ENCODE measurements at regions of chr3 and their contacts with region 1.

Region 1: DNA sequence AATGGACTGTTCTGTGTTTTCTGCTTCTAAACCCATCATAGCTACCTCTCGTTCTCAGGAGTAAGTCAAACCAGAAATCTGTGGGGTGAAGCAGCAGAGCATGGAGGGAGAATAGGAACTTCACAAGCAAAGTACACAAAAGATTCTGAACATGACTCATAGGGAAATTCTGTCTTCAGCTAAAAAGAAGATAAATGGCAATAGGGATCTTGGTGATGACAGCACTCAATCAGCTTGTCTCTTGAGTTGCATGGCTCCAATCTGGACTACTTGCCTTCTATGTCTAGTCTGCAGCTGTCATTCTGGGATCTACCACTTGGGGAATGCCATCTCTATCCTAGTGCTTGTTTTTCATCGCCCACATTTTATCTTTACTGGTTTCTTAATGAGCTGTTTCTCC is 13.5 kb upstream of the GRAMD1C start:
- DNase-seq: no peak
- ATAC-seq: peak; percentile 81
- H3K4me3 Mint-ChIP-seq: no peak overlapping the region
- H3K27ac Mint-ChIP-seq: no peak overlapping the region
- H3K4me1 Mint-ChIP-seq: peaks cover 6% of the 10 kb centered on the region
- H3K27me3 Mint-ChIP-seq: no peaks in the 10 kb centered on the region
- CTCF ChIP-seq: no peak

Region 2: DNA sequence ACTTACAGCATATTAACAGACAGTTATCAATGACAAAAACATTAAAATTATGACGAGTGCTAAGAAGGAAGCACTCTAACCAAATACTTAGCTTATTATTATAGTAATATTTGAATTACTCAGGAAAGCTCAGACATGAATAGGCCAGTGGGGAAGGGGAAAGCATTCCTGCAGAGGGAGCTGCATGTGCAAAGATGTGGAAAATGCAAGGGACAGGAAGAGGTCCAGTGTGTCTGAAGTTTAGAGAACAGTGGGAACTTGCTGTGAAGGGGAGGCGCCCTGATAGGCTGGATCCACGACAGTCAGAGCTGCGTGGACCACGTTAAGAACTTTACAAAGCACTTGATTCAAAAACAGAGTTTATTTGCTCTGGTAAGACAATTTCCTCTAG is 309.0 kb before region 1 on chr3:
- CTCF ChIA-PET with region 1: no interaction called
- POLR2A ChIA-PET with region 1: no interaction called
- DNase-seq: no peak
- ATAC-seq: no peak
- H3K4me3 Mint-ChIP-seq: no peak overlapping the region
- H3K27ac Mint-ChIP-seq: no peak overlapping the region
- H3K4me1 Mint-ChIP-seq: 0 out of 2 replicates have a peak, but pooled peaks cover 4% of the 10 kb centered on the region
- H3K27me3 Mint-ChIP-seq: peaks cover 28% of the 10 kb centered on the region
- CTCF ChIP-seq: no peak

Region 3: DNA sequence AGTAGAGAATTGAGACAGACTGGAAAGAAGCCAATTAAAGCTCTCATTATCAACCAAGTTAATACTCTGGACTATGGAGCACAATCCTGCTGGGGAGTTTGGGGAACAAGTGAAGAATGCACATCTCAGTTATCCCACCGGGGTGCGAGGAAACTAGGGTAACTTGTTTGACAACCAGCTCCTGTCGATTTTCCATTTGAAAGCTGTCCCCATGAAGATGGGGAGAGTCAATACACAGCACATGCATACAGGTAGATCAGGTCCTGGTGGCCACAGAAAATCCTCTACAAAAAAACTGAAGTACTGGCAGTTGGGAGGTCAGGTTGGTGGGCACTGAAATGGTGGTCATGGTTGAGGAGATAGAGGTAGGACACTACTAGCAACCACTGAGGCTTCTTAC is 12.2 kb before region 1 on chr3:
- CTCF ChIA-PET with region 1: interaction called, 10 read pairs
- POLR2A ChIA-PET with region 1: interaction called, 5 read pairs
- DNase-seq: peak; percentile 22
- ATAC-seq: peak; percentile 56
- H3K4me3 Mint-ChIP-seq: no peak overlapping the region; the same call in 1 of the 2 replicates
- H3K27ac Mint-ChIP-seq: peak overlapping the region; percentile 42
- H3K4me1 Mint-ChIP-seq: peaks cover 23% of the 10 kb centered on the region
- H3K27me3 Mint-ChIP-seq: no peaks in the 10 kb centered on the region
- CTCF ChIP-seq: no peak

Region 4: DNA sequence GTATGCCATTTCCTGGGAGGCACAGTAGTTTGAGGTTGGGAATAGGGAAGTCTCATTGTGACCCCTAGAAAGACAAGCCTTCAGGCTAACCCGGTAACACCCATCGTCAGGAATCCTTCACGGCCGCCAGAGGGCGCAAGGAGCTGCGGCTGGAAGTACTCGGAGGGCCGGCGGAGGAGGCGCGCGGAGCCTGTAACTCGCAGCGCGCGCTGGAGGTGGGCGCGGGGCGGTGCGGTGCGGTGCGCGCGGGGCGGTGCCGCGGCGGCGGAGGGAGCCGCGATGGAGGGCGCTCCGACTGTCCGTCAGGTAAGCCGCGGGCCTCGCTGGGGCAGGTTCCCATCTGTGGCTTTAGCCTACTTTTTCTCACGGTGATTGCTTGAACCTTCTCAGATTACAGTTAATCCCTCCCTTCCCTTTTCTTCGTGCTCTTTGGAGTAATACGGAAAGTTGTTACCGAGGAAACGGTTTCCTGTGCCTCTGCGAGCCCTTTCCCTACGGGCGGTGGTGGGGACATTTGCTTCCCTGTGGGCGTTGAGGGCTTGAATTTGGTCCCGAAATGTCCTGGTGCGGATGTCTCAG is 13.6 kb after region 1 on chr3 and contains the start of gene GRAMD1C:
- CTCF ChIA-PET with region 1: interaction called, 11 read pairs
- POLR2A ChIA-PET with region 1: no interaction called
- DNase-seq: peak; percentile 90
- ATAC-seq: peak; percentile 98
- H3K4me3 Mint-ChIP-seq: peak within 1 kb of the TSS; percentile 84
- H3K27ac Mint-ChIP-seq: peak within 1 kb of the TSS; percentile 29; the same call in 1 of the 2 replicates
- H3K4me1 Mint-ChIP-seq: peaks cover 14% of the 10 kb centered on the region
- H3K27me3 Mint-ChIP-seq: peaks cover 3% of the 10 kb centered on the region; the same call in 1 of the 2 replicates
- CTCF ChIP-seq: peak; percentile 82
- total RNA-seq, gene GRAMD1C: 2.6 to 3.5 TPM (median 2.8 TPM) in 3 replicates

Region 5: GRCh38 chr3:113844622-113845222 is 19.6 kb after region 1 on chr3:
- CTCF ChIA-PET with region 1: interaction called, 11 read pairs
- POLR2A ChIA-PET with region 1: no interaction called
- DNase-seq: no peak
- ATAC-seq: no peak; the same call in 1 of the 2 replicates
- H3K4me3 Mint-ChIP-seq: no peak overlapping the region
- H3K27ac Mint-ChIP-seq: no peak overlapping the region
- H3K4me1 Mint-ChIP-seq: peaks cover under 1% of the 10 kb centered on the region; the same call in 1 of the 2 replicates
- H3K27me3 Mint-ChIP-seq: no peaks in the 10 kb centered on the region
- CTCF ChIP-seq: no peak

Measured in WTC11 (cell line).